Activated T-helper 2 cell treated with anti-CD3 and anti-CD28 coated beads, Interferon-gamma antibody, Interleukin-2, Interleukin-4, amounts not matched to agents 10 μg/mL and 5 μg/mL and 100 μg/mL, durations not matched to agents 14 hours and 24 hours and 36 hours (primary cell): ENCODE measurements at regions of chr10 and their contacts with region 1.

Region 1: DNA sequence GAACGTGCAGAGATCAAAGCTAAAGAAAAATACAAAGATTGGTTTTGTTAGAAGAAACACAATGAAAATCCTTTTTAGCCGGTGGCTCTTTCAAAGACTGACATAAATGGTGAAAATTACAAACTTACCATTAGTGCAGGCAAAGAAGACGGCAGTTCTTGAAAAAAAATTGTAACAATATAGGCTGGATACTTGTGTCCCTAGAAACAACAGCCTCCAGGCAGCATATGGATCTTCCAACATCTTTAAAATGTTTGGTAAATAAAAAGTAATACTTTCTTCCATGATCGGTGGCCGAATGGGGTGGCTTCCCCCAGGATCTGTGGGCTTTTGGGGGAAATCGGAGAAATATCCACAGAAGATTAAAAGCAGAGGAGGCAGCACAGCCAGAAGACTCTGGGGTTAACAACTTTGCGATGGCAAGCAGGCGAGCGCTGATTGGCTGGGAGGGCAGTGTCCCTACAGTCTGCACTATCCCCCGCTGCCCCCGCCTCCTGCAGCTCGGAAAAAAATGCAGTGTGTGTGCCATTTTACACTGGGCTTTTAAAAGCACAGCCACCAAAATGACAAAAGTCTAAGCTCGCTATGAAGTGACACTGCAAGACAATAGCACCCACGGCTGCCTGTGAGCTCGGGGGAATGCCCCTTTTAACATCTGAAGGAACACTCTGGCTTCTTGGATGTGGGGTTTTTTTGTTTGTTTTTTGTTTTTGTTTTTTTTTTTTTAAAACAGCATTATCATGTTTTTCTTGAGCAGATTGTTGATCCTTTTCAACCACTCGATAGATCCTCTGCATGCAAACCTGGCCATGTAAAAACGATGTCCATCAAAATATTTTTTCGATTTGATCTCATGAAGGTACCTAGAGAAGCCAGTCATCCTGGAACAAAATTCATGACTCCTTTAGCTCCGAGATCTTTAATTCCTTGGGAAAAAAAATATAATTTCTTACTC is 31.7 kb upstream of the EPC1 start:
- DNase-seq: peak; percentile 88
- H3K4me3 Mint-ChIP-seq: no peak overlapping the region
- H3K27ac Mint-ChIP-seq: no peak overlapping the region
- H3K4me1 Mint-ChIP-seq: peaks cover 20% of the 10 kb centered on the region
- H3K27me3 Mint-ChIP-seq: no peaks in the 10 kb centered on the region

Region 2: GRCh38 chr10:32332299-32332750 is 46.3 kb before region 1 on chr10:
- intact Hi-C with region 1: loop called (anchors 1 kb)
- DNase-seq: peak; percentile 80
- H3K4me3 Mint-ChIP-seq: peak overlapping the region; percentile 85
- H3K27ac Mint-ChIP-seq: peak overlapping the region; percentile 95
- H3K4me1 Mint-ChIP-seq: peaks cover 76% of the 10 kb centered on the region
- H3K27me3 Mint-ChIP-seq: no peaks in the 10 kb centered on the region

Region 3: GRCh38 chr10:32413513-32413912 is 34.9 kb after region 1 on chr10:
- intact Hi-C with region 1: loop called (anchors 5 kb)
- DNase-seq: no peak
- H3K4me3 Mint-ChIP-seq: no peak overlapping the region
- H3K27ac Mint-ChIP-seq: peak overlapping the region; percentile 9
- H3K4me1 Mint-ChIP-seq: peaks cover 6% of the 10 kb centered on the region
- H3K27me3 Mint-ChIP-seq: peaks cover 4% of the 10 kb centered on the region

Region 4: GRCh38 chr10:32489901-32490300 is 111.3 kb after region 1 on chr10:
- intact Hi-C with region 1: no loop called
- DNase-seq: no peak
- H3K4me3 Mint-ChIP-seq: no peak overlapping the region
- H3K27ac Mint-ChIP-seq: no peak overlapping the region
- H3K4me1 Mint-ChIP-seq: no peaks in the 10 kb centered on the region
- H3K27me3 Mint-ChIP-seq: no peaks in the 10 kb centered on the region

Region 5: DNA sequence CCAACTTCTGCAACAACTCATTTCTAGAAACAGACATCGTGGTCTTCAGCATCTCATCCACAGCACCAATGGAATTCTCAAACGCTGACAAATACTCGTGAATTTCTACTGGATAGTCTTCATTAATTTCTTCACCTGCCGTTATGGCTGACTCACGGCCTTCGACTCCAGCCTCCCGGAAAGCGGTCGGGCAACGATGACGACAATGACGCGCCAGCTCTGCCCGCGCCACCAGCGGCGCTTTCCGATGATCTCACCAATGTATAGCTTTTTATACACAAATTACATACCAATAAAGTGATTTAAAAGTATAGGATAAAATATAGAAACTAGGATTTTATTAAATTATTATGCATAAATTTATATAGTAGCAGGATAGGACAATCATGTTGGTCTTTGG is 133.0 kb after region 1 on chr10:
- intact Hi-C with region 1: no loop called
- DNase-seq: no peak
- H3K4me3 Mint-ChIP-seq: no peak overlapping the region
- H3K27ac Mint-ChIP-seq: no peak overlapping the region
- H3K4me1 Mint-ChIP-seq: no peaks in the 10 kb centered on the region
- H3K27me3 Mint-ChIP-seq: no peaks in the 10 kb centered on the region

Region 6: GRCh38 chr10:32958085-32959005 is 579.7 kb after region 1 on chr10 and contains the start of gene ITGB1:
- intact Hi-C with region 1: loop called (anchors 2 kb)
- DNase-seq: peak; percentile 79
- H3K4me3 Mint-ChIP-seq: peak within 1 kb of the TSS; percentile 81
- H3K27ac Mint-ChIP-seq: peak within 1 kb of the TSS; percentile 90
- H3K4me1 Mint-ChIP-seq: peaks cover 45% of the 10 kb centered on the region
- H3K27me3 Mint-ChIP-seq: no peaks in the 10 kb centered on the region
- total RNA-seq, gene ITGB1: 77.8 and 78.7 TPM in 2 replicates